ENCODE measurements at regions of chr6 and their contacts with region 1.

Region 1: GRCh38 chr6:21593412-21593926 is at the start of gene SOX4:
- DNase-seq: peak; percentile 88
- ATAC-seq: peak; percentile 73
- H3K4me3 ChIP-seq: peak within 1 kb of the TSS; percentile 88
- H3K27ac ChIP-seq: peak within 1 kb of the TSS; percentile 81
- H3K4me1 ChIP-seq: no peaks in the 10 kb centered on the region
- H3K27me3 ChIP-seq: no peaks in the 10 kb centered on the region
- CTCF ChIP-seq: no peak
- EP300 ChIP-seq: no peak
- POLR2A ChIP-seq: peak; percentile 99
- RAD21 ChIP-seq: 0 out of 2 replicates have a peak, but pooled peaks have one; percentile 1
- polyA plus RNA-seq, gene SOX4: 46.3 to 119 TPM

Region 2: GRCh38 chr6:20789162-20789561 is 804.3 kb before region 1 on chr6:
- CTCF ChIA-PET with region 1: interaction called, 12 read pairs
- POLR2A ChIA-PET with region 1: no interaction called
- RAD21 ChIA-PET with region 1: no interaction called
- SMC1A ChIA-PET with region 1: interaction called, 3 read pairs
- in situ Hi-C with region 1: no loop called
- intact Hi-C with region 1: no loop called
- DNase-seq: no peak
- ATAC-seq: no peak
- H3K4me3 ChIP-seq: no peak overlapping the region
- H3K27ac ChIP-seq: no peak overlapping the region
- H3K4me1 ChIP-seq: peaks cover 3% of the 10 kb centered on the region; the same call in 1 of the 2 replicates
- H3K27me3 ChIP-seq: no peaks in the 10 kb centered on the region
- CTCF ChIP-seq: peak in 1 of 3 experiments; percentile 22; a peak in 1 of 6 replicates
- EP300 ChIP-seq: no peak
- POLR2A ChIP-seq: no peak
- RAD21 ChIP-seq: peak; percentile 43

Region 3: DNA sequence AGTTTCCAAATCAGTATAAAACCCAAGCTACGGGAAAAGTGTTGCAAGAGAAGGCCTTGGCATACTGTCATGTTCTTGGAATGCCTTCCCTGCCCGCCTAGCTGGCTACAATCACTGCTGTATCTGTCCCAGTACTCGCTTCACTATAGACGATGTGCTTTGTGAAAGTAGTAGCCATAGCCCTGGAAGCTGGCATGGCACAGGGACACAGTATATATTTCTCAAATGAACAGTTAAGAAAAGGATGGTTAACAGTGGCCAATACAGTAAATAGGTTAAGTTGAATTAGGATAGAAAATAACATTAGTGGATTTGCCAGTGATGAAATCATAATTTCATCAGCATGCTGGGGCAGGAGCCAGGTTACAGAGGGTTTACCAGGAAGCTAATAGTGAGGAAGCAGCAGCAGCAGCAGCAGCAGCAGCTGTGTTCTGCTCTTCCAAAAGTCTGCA is 559.9 kb before region 1 on chr6:
- CTCF ChIA-PET with region 1: interaction called, 4 read pairs
- POLR2A ChIA-PET with region 1: no interaction called
- RAD21 ChIA-PET with region 1: interaction called, 5 read pairs
- SMC1A ChIA-PET with region 1: interaction called, 12 read pairs
- in situ Hi-C with region 1: loop called (anchors 10 kb)
- intact Hi-C with region 1: no loop called
- DNase-seq: no peak
- ATAC-seq: no peak
- H3K4me3 ChIP-seq: no peak overlapping the region
- H3K27ac ChIP-seq: no peak overlapping the region
- H3K4me1 ChIP-seq: peaks cover 4% of the 10 kb centered on the region; the same call in 1 of the 2 replicates
- H3K27me3 ChIP-seq: no peaks in the 10 kb centered on the region
- CTCF ChIP-seq: no peak
- EP300 ChIP-seq: no peak
- POLR2A ChIP-seq: no peak
- RAD21 ChIP-seq: no peak

Region 4: GRCh38 chr6:21263531-21264287 is 329.8 kb before region 1 on chr6:
- CTCF ChIA-PET with region 1: interaction called, 3 read pairs
- POLR2A ChIA-PET with region 1: interaction called, 4 read pairs
- RAD21 ChIA-PET with region 1: interaction called, 11 read pairs
- SMC1A ChIA-PET with region 1: interaction called, 20 read pairs
- in situ Hi-C with region 1: no loop called
- intact Hi-C with region 1: no loop called
- DNase-seq: peak; percentile 63
- ATAC-seq: peak; percentile 94
- H3K4me3 ChIP-seq: no peak overlapping the region
- H3K27ac ChIP-seq: peak overlapping the region; percentile 69
- H3K4me1 ChIP-seq: peaks cover 17% of the 10 kb centered on the region
- H3K27me3 ChIP-seq: no peaks in the 10 kb centered on the region
- CTCF ChIP-seq: no peak
- EP300 ChIP-seq: peak; percentile 64 to 92; a peak in 3 of 4 replicates
- POLR2A ChIP-seq: no peak
- RAD21 ChIP-seq: 0 out of 2 replicates have a peak, but pooled peaks have one; percentile 7

Region 5: DNA sequence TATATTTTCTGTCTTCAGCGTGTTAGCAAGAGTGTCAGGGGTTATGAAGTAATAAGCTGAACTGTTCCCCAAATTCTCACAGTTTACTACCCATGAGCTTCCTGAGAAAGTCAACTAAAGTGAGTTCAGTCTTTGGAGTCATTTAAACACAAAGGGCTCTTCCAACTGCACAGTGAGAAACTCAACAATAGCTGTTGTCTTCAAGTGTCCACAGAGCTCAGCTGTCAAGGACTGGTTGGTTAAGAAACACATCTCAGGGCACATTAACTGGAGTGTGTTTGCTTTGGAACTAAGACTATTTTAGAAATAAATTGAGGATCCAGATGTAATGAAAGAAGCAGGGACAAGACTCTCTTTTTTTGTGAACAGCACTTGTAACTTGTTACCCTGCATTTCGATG is 241.3 kb before region 1 on chr6:
- CTCF ChIA-PET with region 1: no interaction called
- POLR2A ChIA-PET with region 1: no interaction called
- RAD21 ChIA-PET with region 1: no interaction called
- SMC1A ChIA-PET with region 1: no interaction called
- in situ Hi-C with region 1: no loop called
- intact Hi-C with region 1: no loop called
- DNase-seq: no peak
- ATAC-seq: no peak
- H3K4me3 ChIP-seq: no peak overlapping the region
- H3K27ac ChIP-seq: no peak overlapping the region
- H3K4me1 ChIP-seq: no peaks in the 10 kb centered on the region
- H3K27me3 ChIP-seq: no peaks in the 10 kb centered on the region
- CTCF ChIP-seq: no peak
- EP300 ChIP-seq: no peak
- POLR2A ChIP-seq: no peak
- RAD21 ChIP-seq: no peak

Region 6: DNA sequence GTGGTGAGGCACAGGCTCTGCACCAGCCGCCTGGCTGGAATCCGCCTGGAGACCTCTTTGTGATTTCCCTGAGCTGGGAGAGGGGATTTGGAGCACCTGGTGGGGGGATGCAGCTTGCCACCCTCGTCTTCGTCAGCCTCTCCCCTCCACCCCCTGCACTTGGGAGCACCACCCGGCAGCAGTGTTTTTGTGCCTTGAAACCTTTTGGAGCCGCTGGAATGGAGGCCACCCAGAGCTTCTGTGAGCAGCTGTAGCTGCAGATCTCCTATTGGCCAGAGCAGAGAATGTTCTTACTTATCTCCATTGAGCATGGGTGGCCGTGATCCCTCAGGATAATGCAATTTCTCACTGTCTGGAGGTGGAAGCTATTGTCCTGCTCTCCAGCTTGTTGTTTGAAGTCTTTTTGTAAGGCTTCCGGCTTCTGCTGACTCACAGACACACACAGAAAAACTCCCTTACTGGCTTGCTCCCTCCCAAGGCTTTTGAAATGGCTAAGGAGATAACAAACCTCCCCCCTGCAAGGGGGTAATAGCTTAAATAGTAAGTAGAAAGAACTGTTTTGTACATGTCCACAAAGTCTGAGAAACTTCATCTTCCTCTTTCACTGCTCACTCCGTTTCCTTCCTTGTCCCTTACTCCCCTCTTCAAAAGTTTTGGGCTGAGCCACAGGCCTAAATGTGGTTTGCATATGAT is 432.1 kb after region 1 on chr6:
- CTCF ChIA-PET with region 1: no interaction called
- POLR2A ChIA-PET with region 1: no interaction called
- RAD21 ChIA-PET with region 1: interaction called, 9 read pairs
- SMC1A ChIA-PET with region 1: interaction called, 10 read pairs
- in situ Hi-C with region 1: no loop called
- intact Hi-C with region 1: loop called (anchors 5 kb)
- DNase-seq: peak; percentile 76
- ATAC-seq: peak; percentile 70
- H3K4me3 ChIP-seq: peak overlapping the region; percentile 54
- H3K27ac ChIP-seq: peak overlapping the region; percentile 96
- H3K4me1 ChIP-seq: peaks cover 38% of the 10 kb centered on the region
- H3K27me3 ChIP-seq: no peaks in the 10 kb centered on the region
- CTCF ChIP-seq: no peak
- EP300 ChIP-seq: peak in 1 of 2 experiments; percentile 53; a peak in 1 of 4 replicates
- POLR2A ChIP-seq: no peak
- RAD21 ChIP-seq: no peak; the same call in 1 of the 2 replicates

Region 7: GRCh38 chr6:22827760-22828159 is 1234.3 kb after region 1 on chr6:
- CTCF ChIA-PET with region 1: interaction called, 3 read pairs
- POLR2A ChIA-PET with region 1: no interaction called
- RAD21 ChIA-PET with region 1: no interaction called
- SMC1A ChIA-PET with region 1: no interaction called
- in situ Hi-C with region 1: no loop called
- intact Hi-C with region 1: loop called (anchors 2 kb)
- DNase-seq: no peak
- ATAC-seq: peak; percentile 28
- H3K4me3 ChIP-seq: no peak overlapping the region
- H3K27ac ChIP-seq: no peak overlapping the region
- H3K4me1 ChIP-seq: no peaks in the 10 kb centered on the region
- H3K27me3 ChIP-seq: no peaks in the 10 kb centered on the region
- CTCF ChIP-seq: no peak
- EP300 ChIP-seq: no peak
- POLR2A ChIP-seq: no peak
- RAD21 ChIP-seq: no peak

Measured in GM12878 (cell line).